GM12878 (cell line): ENCODE measurements at regions of chr13 and their contacts with region 1.

Region 1: GRCh38 chr13:98504371-98504963 is 72.4 kb downstream of the STK24 start:
- DNase-seq: peak; percentile 56
- ATAC-seq: peak; percentile 75
- H3K4me3 ChIP-seq: peak overlapping the region; percentile 15; the same call in 1 of the 2 replicates
- H3K27ac ChIP-seq: peak overlapping the region; percentile 49
- H3K4me1 ChIP-seq: peaks cover 75% of the 10 kb centered on the region
- H3K27me3 ChIP-seq: no peaks in the 10 kb centered on the region
- CTCF ChIP-seq: no peak
- EP300 ChIP-seq: peak; percentile 46 to 82; a peak in 3 of 4 replicates
- POLR2A ChIP-seq: no peak
- RAD21 ChIP-seq: 0 out of 2 replicates have a peak, but pooled peaks have one; percentile 20

Region 2: GRCh38 chr13:98267080-98267912 is 237.2 kb before region 1 on chr13:
- CTCF ChIA-PET with region 1: no interaction called
- POLR2A ChIA-PET with region 1: no interaction called
- RAD21 ChIA-PET with region 1: no interaction called
- SMC1A ChIA-PET with region 1: no interaction called
- in situ Hi-C with region 1: no loop called
- intact Hi-C with region 1: no loop called
- DNase-seq: peak; percentile 33
- ATAC-seq: peak; percentile 85
- H3K4me3 ChIP-seq: no peak overlapping the region
- H3K27ac ChIP-seq: no peak overlapping the region
- H3K4me1 ChIP-seq: peaks cover 6% of the 10 kb centered on the region
- H3K27me3 ChIP-seq: no peaks in the 10 kb centered on the region
- CTCF ChIP-seq: no peak
- EP300 ChIP-seq: no peak
- POLR2A ChIP-seq: no peak
- RAD21 ChIP-seq: no peak

Region 3: GRCh38 chr13:98476538-98476966 is 27.9 kb before region 1 on chr13:
- CTCF ChIA-PET with region 1: interaction called, 8 read pairs
- POLR2A ChIA-PET with region 1: interaction called, 13 read pairs
- RAD21 ChIA-PET with region 1: interaction called, 37 read pairs
- SMC1A ChIA-PET with region 1: interaction called, 39 read pairs
- in situ Hi-C with region 1: no loop called
- intact Hi-C with region 1: loop called (anchors 1 kb)
- DNase-seq: peak; percentile 90
- ATAC-seq: peak; percentile 94
- H3K4me3 ChIP-seq: peak overlapping the region; percentile 13; the same call in 1 of the 2 replicates
- H3K27ac ChIP-seq: peak overlapping the region; percentile 67
- H3K4me1 ChIP-seq: peaks cover 44% of the 10 kb centered on the region
- H3K27me3 ChIP-seq: no peaks in the 10 kb centered on the region
- CTCF ChIP-seq: no peak
- EP300 ChIP-seq: peak; percentile 96 to 97
- POLR2A ChIP-seq: peak; percentile 70
- RAD21 ChIP-seq: 0 out of 2 replicates have a peak, but pooled peaks have one; percentile 1

Region 4: GRCh38 chr13:98489479-98490194 is 14.8 kb before region 1 on chr13:
- CTCF ChIA-PET with region 1: interaction called, 8 read pairs
- POLR2A ChIA-PET with region 1: interaction called, 9 read pairs
- RAD21 ChIA-PET with region 1: interaction called, 37 read pairs
- SMC1A ChIA-PET with region 1: interaction called, 36 read pairs
- in situ Hi-C with region 1: no loop called
- intact Hi-C with region 1: no loop called
- DNase-seq: no peak
- ATAC-seq: peak; percentile 17
- H3K4me3 ChIP-seq: peak overlapping the region; percentile 13; the same call in 1 of the 2 replicates
- H3K27ac ChIP-seq: peak overlapping the region; percentile 70
- H3K4me1 ChIP-seq: peaks cover 55% of the 10 kb centered on the region
- H3K27me3 ChIP-seq: no peaks in the 10 kb centered on the region
- CTCF ChIP-seq: no peak
- EP300 ChIP-seq: no peak
- POLR2A ChIP-seq: no peak
- RAD21 ChIP-seq: no peak

Region 5: GRCh38 chr13:98528663-98529570 is 24.4 kb after region 1 on chr13:
- CTCF ChIA-PET with region 1: interaction called, 11 read pairs
- POLR2A ChIA-PET with region 1: interaction called, 5 read pairs
- RAD21 ChIA-PET with region 1: interaction called, 9 read pairs
- SMC1A ChIA-PET with region 1: interaction called, 12 read pairs
- in situ Hi-C with region 1: no loop called
- intact Hi-C with region 1: no loop called
- DNase-seq: no peak
- ATAC-seq: peak; percentile 23
- H3K4me3 ChIP-seq: no peak overlapping the region
- H3K27ac ChIP-seq: peak overlapping the region; percentile 16; the same call in 1 of the 2 replicates
- H3K4me1 ChIP-seq: peaks cover 56% of the 10 kb centered on the region
- H3K27me3 ChIP-seq: no peaks in the 10 kb centered on the region
- CTCF ChIP-seq: no peak
- EP300 ChIP-seq: no peak
- POLR2A ChIP-seq: no peak
- RAD21 ChIP-seq: no peak

Region 6: DNA sequence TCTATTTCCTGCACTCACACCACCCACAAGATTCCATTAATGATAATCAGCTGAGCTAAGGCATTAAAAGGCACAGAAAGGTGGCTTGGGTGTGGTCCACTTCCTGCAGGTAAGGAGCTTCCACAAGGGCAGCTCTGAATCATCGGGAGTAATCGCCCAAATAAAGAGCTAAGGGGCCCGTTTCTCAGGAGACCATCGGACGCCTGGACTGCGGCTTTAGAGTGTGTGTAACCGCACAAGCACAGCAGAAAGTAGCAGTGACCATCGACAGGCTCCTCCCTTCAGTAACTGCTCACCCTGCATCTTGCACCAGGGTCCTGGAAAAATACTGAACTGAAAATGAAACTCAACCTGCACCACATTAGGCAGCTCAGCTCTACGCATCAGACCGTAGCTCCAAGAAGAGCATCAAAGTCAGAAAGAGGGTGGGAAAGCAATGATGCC is 66.5 kb after region 1 on chr13:
- CTCF ChIA-PET with region 1: interaction called, 21 read pairs
- POLR2A ChIA-PET with region 1: interaction called, 11 read pairs
- RAD21 ChIA-PET with region 1: interaction called, 35 read pairs
- SMC1A ChIA-PET with region 1: interaction called, 32 read pairs
- in situ Hi-C with region 1: no loop called
- intact Hi-C with region 1: loop called (anchors 1 kb)
- DNase-seq: peak; percentile 92
- ATAC-seq: peak; percentile 83
- H3K4me3 ChIP-seq: peak overlapping the region; percentile 87
- H3K27ac ChIP-seq: peak overlapping the region; percentile 73
- H3K4me1 ChIP-seq: peaks cover 42% of the 10 kb centered on the region
- H3K27me3 ChIP-seq: no peaks in the 10 kb centered on the region
- CTCF ChIP-seq: no peak
- EP300 ChIP-seq: peak; percentile 29 to 40; a peak in 2 of 4 replicates
- POLR2A ChIP-seq: no peak
- RAD21 ChIP-seq: no peak